CD14-positive monocyte (primary cell): ENCODE measurements at regions of chr16 and their contacts with region 1.

Region 1: DNA sequence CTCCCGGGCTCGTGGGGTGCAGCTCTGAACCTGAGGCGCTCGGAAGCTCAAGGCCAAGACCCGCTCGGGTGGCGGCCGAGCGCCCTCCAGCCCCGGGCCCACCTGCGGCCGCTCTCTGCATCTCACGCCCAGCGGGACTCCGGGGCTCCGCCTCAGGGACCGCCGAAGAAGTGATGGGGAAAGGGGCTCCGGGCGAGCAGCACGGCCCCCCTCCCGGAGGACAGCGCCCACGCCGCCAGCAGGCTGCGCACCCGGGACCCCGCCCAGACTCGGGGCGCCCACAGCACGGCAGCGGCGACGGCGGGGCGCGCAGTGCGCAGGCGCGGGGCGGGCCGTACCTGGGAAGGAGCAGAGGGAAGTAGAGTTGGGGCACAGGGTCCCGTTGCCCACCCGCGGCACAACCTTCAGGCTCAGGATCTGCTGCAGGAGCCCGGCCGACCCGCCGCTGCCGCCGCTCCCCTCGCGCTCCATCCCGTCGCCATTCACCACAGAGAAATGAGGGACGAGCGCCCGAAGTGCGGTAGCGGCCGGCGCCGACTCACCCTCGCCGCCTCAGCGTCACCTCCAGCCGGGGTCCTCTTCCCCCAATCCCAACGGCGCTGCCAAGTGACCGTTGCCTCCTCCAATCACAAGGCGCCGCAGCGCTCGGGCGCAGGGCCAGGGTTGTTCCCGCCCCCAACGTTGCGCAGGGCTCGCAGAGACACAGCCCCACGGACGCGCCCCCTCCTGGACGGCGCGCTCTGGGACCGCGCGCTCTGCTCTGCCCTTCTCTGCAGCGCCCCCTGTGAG is at the start of gene TMEM170A:
- DNase-seq: peak; percentile 99 to 100 (median 99)
- H3K4me3 ChIP-seq: peak within 1 kb of the TSS; percentile 65 to 87 (median 78)
- H3K4me3 Mint-ChIP-seq: peak within 1 kb of the TSS; percentile 95 to 96
- H3K27ac ChIP-seq: peak within 1 kb of the TSS; percentile 88 to 94
- H3K27ac Mint-ChIP-seq: peak within 1 kb of the TSS; percentile 89 to 97 (median 96)
- H3K4me1 ChIP-seq: peaks cover 25 to 34% of the 10 kb centered on the region in 2 donors
- H3K4me1 Mint-ChIP-seq: peaks cover 29% of the 10 kb centered on the region
- H3K27me3 ChIP-seq: no peaks in the 10 kb centered on the region
- H3K27me3 Mint-ChIP-seq: peaks cover 0 to 3% (median 2%) of the 10 kb centered on the region in 3 donors
- CTCF ChIP-seq: peak; percentile 100
- polyA plus RNA-seq, gene TMEM170A: 17.9 to 31.6 (median 25.4) TPM

Region 2: DNA sequence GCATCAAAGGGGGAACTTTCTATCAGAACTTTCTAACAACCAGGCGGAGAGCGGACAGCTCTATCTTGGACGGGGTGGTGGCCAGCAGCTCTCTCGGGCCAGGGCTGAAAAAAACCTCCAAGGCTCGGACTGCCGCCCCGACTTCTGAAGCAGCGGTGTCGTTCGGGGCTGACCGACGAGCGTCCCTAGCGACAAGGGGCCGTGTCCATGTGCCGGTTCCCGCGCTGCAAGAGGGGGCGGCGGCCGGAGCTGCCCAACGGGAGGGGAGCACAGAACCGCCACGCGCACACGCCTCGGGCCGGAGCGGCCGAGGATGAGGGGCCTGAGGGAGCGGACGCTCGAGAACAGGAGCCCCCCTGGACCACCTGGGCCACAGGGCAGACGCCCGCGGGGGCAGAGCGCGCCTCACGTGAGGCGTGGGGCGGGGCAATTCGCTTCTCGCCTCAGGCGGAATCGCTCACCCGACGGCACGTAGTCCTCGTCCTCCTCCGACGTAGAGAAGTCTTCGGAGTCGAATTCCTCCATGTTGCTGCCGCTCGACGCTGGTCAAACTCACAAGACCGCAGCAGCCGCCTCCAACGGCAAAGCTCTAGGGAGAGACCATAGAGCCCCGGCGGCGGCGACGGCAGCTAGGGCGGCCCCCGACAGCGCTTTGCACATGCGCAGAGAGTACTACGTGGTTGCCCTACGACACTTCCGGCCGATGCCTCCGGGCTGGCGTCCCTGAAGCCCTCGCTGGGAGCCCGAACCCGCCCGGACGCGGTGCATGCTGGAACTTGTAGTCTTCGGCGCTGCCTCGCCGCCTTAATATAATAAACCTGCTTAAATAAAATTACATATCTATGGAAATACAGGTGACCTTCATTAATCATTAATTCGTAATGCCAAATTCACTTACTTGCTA is 31.2 kb before region 1 on chr16 and contains the start of gene CFDP1:
- intact Hi-C with region 1: loop called (anchors 1 to 2 kb)
- DNase-seq: peak; percentile 93 to 95 (median 94)
- H3K4me3 ChIP-seq: peak within 1 kb of the TSS; percentile 74 to 91 (median 83)
- H3K4me3 Mint-ChIP-seq: peak within 1 kb of the TSS; percentile 76 to 99
- H3K27ac ChIP-seq: peak within 1 kb of the TSS; percentile 96 to 99
- H3K27ac Mint-ChIP-seq: peak within 1 kb of the TSS; percentile 95 to 100 (median 99)
- H3K4me1 ChIP-seq: peaks cover 16 to 26% of the 10 kb centered on the region in 2 donors
- H3K4me1 Mint-ChIP-seq: peaks cover 30% of the 10 kb centered on the region
- H3K27me3 ChIP-seq: no peaks in the 10 kb centered on the region
- H3K27me3 Mint-ChIP-seq: peaks cover 0 to 10% (median 3%) of the 10 kb centered on the region in 3 donors
- CTCF ChIP-seq: no peak
- polyA plus RNA-seq, gene CFDP1: 12.9 to 23.2 (median 19.0) TPM

Region 3: DNA sequence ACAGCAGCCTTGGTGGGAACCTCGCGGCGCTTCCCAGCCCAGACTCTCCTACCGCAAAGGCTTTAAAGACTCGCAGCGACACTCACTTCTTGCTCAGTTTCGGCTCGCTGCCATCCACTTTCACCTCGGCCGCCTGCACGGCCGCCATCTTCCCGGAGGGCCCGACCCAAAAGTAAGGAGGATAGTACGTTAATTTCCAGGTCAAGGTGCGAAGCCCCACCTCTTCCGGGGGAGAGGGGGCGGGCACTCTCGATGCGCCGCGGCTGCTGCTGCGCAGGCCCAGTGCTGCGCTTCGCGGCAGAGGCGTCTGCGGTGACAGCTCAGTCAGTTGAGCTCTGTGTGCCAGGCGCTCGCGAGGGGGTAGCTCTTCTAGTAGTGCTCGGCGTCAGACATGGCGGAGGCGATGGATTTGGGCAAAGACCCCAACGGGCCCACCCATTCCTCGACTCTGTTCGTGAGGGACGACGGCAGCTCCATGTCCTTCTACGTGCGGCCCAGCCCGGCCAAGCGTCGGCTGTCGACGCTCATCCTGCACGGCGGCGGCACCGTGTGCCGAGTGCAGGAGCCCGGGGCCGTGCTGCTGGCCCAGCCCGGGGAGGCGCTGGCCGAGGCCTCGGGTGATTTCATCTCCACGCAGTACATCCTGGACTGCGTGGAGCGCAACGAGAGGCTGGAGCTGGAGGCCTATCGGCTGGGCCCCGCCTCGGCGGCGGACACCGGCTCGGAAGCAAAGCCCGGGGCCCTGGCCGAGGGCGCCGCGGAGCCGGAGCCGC is 183.4 kb after region 1 on chr16 and contains the starts of genes KARS1 and TERF2IP:
- intact Hi-C with region 1: loop called in 1 of 2 experiments (anchors 5 kb)
- DNase-seq: peak; percentile 91
- H3K4me3 ChIP-seq: peak within 1 kb of the TSS; percentile 90 to 95 (median 92)
- H3K4me3 Mint-ChIP-seq: peak within 1 kb of the TSS; percentile 96 to 97
- H3K27ac ChIP-seq: peak within 1 kb of the TSS; percentile 89 to 97
- H3K27ac Mint-ChIP-seq: peak within 1 kb of the TSS; percentile 93 to 98 (median 96)
- H3K4me1 ChIP-seq: peaks cover 34 to 45% of the 10 kb centered on the region in 2 donors
- H3K4me1 Mint-ChIP-seq: peaks cover 40% of the 10 kb centered on the region
- H3K27me3 ChIP-seq: no peaks in the 10 kb centered on the region
- H3K27me3 Mint-ChIP-seq: no peaks in the 10 kb centered on the region
- CTCF ChIP-seq: no peak
- polyA plus RNA-seq, gene KARS1: 66.1 to 150 (median 116) TPM
- polyA plus RNA-seq, gene TERF2IP: 39.7 to 64.1 (median 47.9) TPM